Heart right ventricle (tissue), 16 donors: ENCODE measurements at regions of chr12 and their contacts with region 1.

Region 1: GRCh38 chr12:123141615-123142517 is 9.0 kb downstream of the PITPNM2 start:
- DNase-seq: peak; percentile 51 to 62
- ATAC-seq: peak; percentile 73 to 91 (median 84)
- H3K4me3 ChIP-seq: no peak overlapping the region
- H3K27ac ChIP-seq: peak overlapping the region; percentile 7 to 89 (median 77)
- H3K4me1 ChIP-seq: peaks cover 25 to 54% (median 46%) of the 10 kb centered on the region in 9 donors
- H3K27me3 ChIP-seq: no peaks in the 10 kb centered on the region
- CTCF ChIP-seq: no peak

Region 2: DNA sequence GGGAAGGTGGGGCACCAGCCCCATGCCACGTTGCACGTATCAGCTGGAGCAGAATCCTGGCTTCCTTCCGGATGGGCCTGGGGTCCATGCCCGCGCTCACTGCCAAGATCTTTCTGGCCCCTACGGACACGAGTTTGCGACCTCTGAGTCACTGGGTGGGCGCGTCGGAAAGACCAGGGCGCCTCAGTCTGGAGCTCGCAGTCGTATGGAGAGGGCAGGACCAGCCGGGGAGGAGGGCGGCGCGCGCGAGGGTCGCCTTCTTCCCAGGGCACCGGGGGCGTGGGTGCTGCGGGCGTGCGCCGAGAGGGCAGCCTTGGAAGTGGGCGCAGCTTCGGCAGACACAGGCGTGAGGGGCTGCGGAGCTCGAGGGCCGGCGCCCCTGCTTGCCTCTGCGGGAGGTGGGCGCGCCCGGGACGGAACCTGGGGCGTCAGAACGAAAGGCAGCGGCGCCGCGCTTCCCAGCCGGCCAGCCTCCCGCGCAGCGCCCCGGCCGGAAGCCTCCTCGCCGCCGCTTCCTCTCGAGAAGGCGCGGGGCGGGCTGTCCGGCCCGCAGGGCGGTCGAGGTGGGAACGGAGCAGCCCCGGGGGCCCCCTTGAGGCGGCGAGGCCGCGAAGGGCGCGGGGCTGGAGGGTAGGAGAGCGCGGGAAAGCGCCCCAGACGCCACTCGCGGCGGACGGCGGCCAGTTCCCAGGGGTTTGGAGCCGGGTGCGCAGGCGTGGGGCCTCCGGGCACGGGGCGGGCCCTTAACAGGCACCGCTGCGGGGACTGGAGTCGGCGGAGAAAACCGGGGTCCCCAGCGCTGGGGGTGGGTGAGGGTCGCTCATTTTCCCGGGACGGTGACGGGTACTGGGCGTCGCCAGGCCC is 161.5 kb before region 1 on chr12 and contains the start of gene ARL6IP4:
- intact Hi-C with region 1: loop called in 2 of 10 experiments (anchors 5 to 10 kb)
- DNase-seq: peak; percentile 53 to 72
- ATAC-seq: peak; percentile 64 to 86 (median 74)
- H3K4me3 ChIP-seq: peak within 1 kb of the TSS; percentile 76 to 100 (median 92)
- H3K27ac ChIP-seq: peak within 1 kb of the TSS; percentile 82 to 98 (median 92)
- H3K4me1 ChIP-seq: peaks cover 36 to 87% (median 72%) of the 10 kb centered on the region in 9 donors
- H3K27me3 ChIP-seq: no peaks in the 10 kb centered on the region
- CTCF ChIP-seq: peak in 1 of 9 donors; percentile 26
- total RNA-seq, gene ARL6IP4: 125 to 161 (median 137) TPM

Region 3: GRCh38 chr12:123062681-123063486 is 79.0 kb before region 1 on chr12:
- intact Hi-C with region 1: loop called in 2 of 10 experiments (anchors 5 to 10 kb)
- DNase-seq: peak; percentile 55 to 56
- ATAC-seq: peak; percentile 43 to 81 (median 70)
- H3K4me3 ChIP-seq: no peak overlapping the region
- H3K27ac ChIP-seq: peak overlapping the region; percentile 84 to 97 (median 91)
- H3K4me1 ChIP-seq: peaks cover 57 to 97% (median 91%) of the 10 kb centered on the region in 9 donors
- H3K27me3 ChIP-seq: no peaks in the 10 kb centered on the region
- CTCF ChIP-seq: no peak

Region 4: DNA sequence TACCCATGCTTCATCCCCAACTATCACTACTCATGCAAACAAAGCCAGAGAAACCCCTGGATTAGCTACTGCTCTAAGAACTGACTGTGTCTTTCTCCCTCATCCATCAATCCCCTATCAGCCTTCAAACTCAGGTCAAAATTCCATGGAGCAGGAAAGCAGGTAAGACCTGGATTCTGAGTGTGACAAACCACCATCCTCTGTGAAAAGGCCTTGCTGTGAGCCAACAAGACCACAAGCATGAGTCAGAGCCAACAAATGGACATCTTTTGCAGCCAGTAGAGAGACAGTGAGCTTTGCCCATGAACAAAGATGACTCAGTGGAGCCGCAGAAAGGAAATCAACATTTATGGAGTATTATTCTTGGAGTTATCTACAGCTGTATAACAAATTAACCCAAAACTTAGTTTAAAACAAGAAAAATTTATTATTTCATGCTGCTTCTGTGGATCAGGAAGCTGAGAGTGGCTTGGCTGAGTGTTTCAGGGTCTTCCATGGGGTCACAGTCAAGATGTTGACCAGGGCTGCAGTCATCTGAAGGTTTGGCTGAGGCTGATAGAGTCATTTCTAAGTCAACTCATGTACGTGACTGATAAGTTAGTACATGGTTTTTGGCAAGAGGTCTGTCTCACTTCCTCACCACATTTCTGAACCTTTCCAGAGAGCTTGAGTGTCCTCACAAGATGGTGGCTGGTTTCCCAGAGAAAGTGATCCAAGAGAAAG is 52.1 kb before region 1 on chr12:
- intact Hi-C with region 1: loop called in 1 of 10 experiments (anchors 10 kb)
- DNase-seq: no peak
- ATAC-seq: no peak
- H3K4me3 ChIP-seq: no peak overlapping the region
- H3K27ac ChIP-seq: peak overlapping the region in 6 of 10 donors; percentile 15 to 91 (median 54)
- H3K4me1 ChIP-seq: peaks cover 9 to 84% (median 76%) of the 10 kb centered on the region in 9 donors
- H3K27me3 ChIP-seq: no peaks in the 10 kb centered on the region
- CTCF ChIP-seq: no peak

Region 5: GRCh38 chr12:123106628-123107359 is 35.1 kb before region 1 on chr12:
- intact Hi-C with region 1: loop called in 7 of 10 experiments (anchors 5 kb)
- DNase-seq: peak in 1 of 2 donors; percentile 60
- ATAC-seq: peak; percentile 50 to 84 (median 60)
- H3K4me3 ChIP-seq: no peak overlapping the region
- H3K27ac ChIP-seq: peak overlapping the region; percentile 4 to 92 (median 83)
- H3K4me1 ChIP-seq: peaks cover 36 to 90% (median 77%) of the 10 kb centered on the region in 9 donors
- H3K27me3 ChIP-seq: no peaks in the 10 kb centered on the region
- CTCF ChIP-seq: no peak

Region 6: GRCh38 chr12:124709722-124710677 is 1568.1 kb after region 1 on chr12:
- intact Hi-C with region 1: no loop called
- DNase-seq: no peak
- ATAC-seq: no peak
- H3K4me3 ChIP-seq: no peak overlapping the region
- H3K27ac ChIP-seq: peak overlapping the region in 1 of 10 donors; percentile 22
- H3K4me1 ChIP-seq: peaks cover 0 to 33% (median 11%) of the 10 kb centered on the region in 9 donors
- H3K27me3 ChIP-seq: no peaks in the 10 kb centered on the region
- CTCF ChIP-seq: peak in 1 of 9 donors; percentile 15